Panc1 (cell line): ENCODE measurements at regions of chr6 and their contacts with region 1.

Region 1: DNA sequence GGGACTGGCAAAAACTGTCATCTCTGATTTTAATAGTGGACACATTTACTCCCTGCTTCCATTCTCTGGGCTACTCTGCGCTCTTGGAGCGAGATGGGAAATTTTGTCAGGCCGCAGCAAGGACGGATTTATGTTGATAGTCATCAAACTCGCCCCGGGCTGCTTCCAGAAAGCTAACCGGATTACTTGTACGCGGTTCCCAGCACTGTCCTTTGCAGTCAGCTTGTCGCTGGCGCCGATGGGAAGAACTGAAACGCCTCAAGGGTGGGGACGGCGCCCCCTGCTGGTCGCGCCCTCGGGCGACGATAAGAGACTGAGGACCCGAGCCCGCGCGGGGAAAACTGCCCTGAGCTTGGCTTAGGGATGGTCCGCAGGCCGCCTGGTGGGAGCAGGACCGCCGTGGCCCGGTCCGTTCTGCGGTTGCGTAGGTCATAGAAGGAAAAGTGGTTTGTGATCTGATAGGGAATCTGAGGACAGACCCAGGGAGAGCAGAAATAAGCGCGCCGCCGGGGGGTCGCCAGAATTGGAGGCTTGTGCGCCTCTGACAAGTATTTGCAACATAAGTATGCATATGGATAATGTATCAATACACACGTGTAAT is 984 bp upstream of the ABT1 start:
- DNase-seq: peak; percentile 78
- ATAC-seq: peak; percentile 86
- H3K4me3 ChIP-seq: peak overlapping the region; percentile 94 to 96
- H3K27ac ChIP-seq: peak overlapping the region; percentile 90
- H3K4me1 ChIP-seq: peaks cover 3% of the 10 kb centered on the region; the same call in 1 of the 2 replicates
- H3K27me3 ChIP-seq: no peaks in the 10 kb centered on the region
- CTCF ChIP-seq: peak; percentile 96

Region 2: GRCh38 chr6:26312501-26313390 is 283.0 kb before region 1 on chr6:
- CTCF ChIA-PET with region 1: no interaction called
- POLR2A ChIA-PET with region 1: no interaction called
- in situ Hi-C with region 1: no loop called
- intact Hi-C with region 1: no loop called
- DNase-seq: no peak
- ATAC-seq: peak; percentile 91
- H3K4me3 ChIP-seq: peak overlapping the region; percentile 56 to 92
- H3K27ac ChIP-seq: peak overlapping the region; percentile 69
- H3K4me1 ChIP-seq: peaks cover 9% of the 10 kb centered on the region
- H3K27me3 ChIP-seq: no peaks in the 10 kb centered on the region
- CTCF ChIP-seq: no peak

Region 3: DNA sequence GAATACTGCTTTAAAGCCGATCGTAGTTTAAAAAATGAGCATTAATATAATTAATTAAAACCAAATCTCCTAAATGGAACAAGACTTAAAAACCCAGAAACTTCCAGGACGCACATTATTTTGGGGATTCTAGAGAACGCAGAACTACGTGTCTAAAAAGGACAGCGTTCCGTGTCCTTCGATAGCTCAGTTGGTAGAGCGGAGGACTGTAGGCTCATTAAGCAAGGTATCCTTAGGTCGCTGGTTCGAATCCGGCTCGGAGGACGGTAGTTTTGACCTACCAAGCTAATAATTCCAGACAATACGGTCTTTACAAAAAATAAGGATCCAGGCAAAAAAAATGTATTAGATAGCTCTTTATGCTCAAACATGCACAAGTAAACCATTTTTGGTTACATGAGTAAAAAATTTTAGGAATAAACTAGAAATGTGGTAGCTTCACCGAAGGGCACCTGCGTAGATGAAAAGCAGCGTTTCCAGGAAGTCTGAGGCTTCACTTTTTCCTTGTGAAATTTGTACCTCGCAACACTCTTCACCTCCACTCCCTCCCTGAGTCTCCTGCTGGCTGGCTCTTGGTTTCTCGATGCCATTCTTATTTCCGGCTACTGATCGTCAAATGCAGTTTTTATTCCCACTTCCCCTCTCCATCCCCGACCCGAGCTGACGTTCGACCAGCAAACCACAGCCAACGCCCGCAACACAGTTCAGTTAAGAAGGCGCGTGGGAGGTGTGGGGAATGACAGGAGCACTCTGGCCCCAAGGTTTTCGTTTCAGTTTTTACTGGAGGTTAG is 18.6 kb before region 1 on chr6:
- CTCF ChIA-PET with region 1: interaction called, 39 read pairs
- POLR2A ChIA-PET with region 1: interaction called, 10 read pairs
- in situ Hi-C with region 1: no loop called
- intact Hi-C with region 1: loop called (anchors 1 kb)
- DNase-seq: peak; percentile 96
- ATAC-seq: peak; percentile 83
- H3K4me3 ChIP-seq: peak overlapping the region; percentile 55 to 84
- H3K27ac ChIP-seq: 0 out of 2 replicates have a peak overlapping the region, but pooled peaks have one; percentile 2
- H3K4me1 ChIP-seq: peaks cover 17% of the 10 kb centered on the region
- H3K27me3 ChIP-seq: no peaks in the 10 kb centered on the region
- CTCF ChIP-seq: no peak